MCF 10A (cell line): ENCODE measurements at regions of chr13 and their contacts with region 1.

Region 1: DNA sequence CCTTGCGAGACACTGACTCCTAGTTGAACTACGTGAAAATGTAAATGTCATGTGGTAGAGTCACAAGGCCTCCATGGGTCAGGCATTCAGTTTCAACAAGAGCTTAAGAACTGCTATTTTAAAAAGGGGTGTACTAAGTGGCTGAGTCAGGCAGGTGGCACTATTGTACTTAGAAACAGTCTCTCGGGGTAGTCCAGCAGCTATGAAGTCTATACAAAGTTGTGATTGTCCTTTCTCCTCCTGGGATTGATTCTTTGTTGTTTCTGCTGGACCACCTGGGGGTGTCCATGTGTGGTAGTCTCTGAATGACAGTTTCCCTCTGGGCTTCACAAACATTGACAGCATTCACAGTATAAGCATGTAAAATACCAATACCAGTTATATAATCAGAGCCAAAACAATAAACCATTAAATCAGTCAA is 33.0 kb downstream of the UGGT2 start:
- DNase-seq: peak; percentile 70
- H3K4me3 Mint-ChIP-seq: no peak overlapping the region
- H3K27ac Mint-ChIP-seq: peak overlapping the region; percentile 32
- H3K4me1 Mint-ChIP-seq: no peaks in the 10 kb centered on the region
- H3K27me3 Mint-ChIP-seq: no peaks in the 10 kb centered on the region
- CTCF ChIP-seq: peak; percentile 89

Region 2: DNA sequence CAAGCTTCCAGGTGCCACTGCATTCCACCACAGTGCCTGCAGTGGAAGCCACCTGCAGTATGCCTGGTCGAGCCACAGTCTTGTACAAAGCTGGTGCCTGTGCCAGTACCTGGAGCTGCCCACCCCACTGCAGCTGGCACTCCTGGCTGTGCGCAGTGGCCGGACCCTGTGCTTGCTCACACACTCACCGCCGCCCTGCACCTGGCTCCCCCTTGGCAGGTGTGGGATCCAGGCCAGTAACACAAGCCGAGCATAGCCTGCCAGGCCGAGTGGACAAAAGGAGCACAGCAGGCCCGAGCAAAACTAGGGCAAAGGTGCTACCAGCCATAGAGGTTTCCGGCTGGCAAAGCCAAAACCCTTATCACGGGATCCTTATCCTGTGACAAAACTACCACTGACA is 14.5 kb after region 1 on chr13:
- CTCF ChIA-PET with region 1: interaction called, 25 read pairs
- POLR2A ChIA-PET with region 1: interaction called, 6 read pairs
- intact Hi-C with region 1: no loop called
- DNase-seq: no peak
- H3K4me3 Mint-ChIP-seq: no peak overlapping the region
- H3K27ac Mint-ChIP-seq: no peak overlapping the region
- H3K4me1 Mint-ChIP-seq: peaks cover 5% of the 10 kb centered on the region
- H3K27me3 Mint-ChIP-seq: no peaks in the 10 kb centered on the region
- CTCF ChIP-seq: no peak

Region 3: GRCh38 chr13:96065849-96066248 is 45.7 kb after region 1 on chr13:
- CTCF ChIA-PET with region 1: no interaction called
- POLR2A ChIA-PET with region 1: no interaction called
- intact Hi-C with region 1: no loop called
- DNase-seq: no peak
- H3K4me3 Mint-ChIP-seq: no peak overlapping the region
- H3K27ac Mint-ChIP-seq: no peak overlapping the region
- H3K4me1 Mint-ChIP-seq: no peaks in the 10 kb centered on the region
- H3K27me3 Mint-ChIP-seq: peaks cover 51% of the 10 kb centered on the region
- CTCF ChIP-seq: no peak

Region 4: DNA sequence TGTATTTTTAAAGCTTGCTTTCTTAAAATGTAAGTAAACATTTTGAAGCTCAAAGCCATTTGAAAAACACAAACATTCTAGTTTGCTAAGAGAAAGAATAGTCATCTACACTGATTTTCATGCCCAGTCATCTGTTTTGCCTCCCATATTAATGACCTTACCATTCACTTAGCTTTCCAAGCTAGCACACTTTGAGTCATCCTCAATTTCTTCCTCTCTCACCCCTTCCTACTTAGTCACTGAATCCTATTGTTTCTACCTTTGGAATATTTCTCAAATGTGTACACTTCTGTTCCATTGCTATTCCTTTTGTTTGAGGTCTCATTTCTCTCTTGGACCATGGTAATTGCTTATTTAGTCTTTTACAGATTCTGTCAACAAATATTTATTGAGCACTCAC is 62.5 kb after region 1 on chr13:
- CTCF ChIA-PET with region 1: interaction called, 12 read pairs
- POLR2A ChIA-PET with region 1: no interaction called
- intact Hi-C with region 1: no loop called
- DNase-seq: peak; percentile 25
- H3K4me3 Mint-ChIP-seq: no peak overlapping the region
- H3K27ac Mint-ChIP-seq: no peak overlapping the region
- H3K4me1 Mint-ChIP-seq: no peaks in the 10 kb centered on the region
- H3K27me3 Mint-ChIP-seq: peaks cover 22% of the 10 kb centered on the region
- CTCF ChIP-seq: no peak

Region 5: GRCh38 chr13:96796091-96796633 is 776.0 kb after region 1 on chr13:
- CTCF ChIA-PET with region 1: no interaction called
- POLR2A ChIA-PET with region 1: no interaction called
- intact Hi-C with region 1: loop called (anchors 1 kb)
- DNase-seq: no peak
- H3K4me3 Mint-ChIP-seq: no peak overlapping the region
- H3K27ac Mint-ChIP-seq: no peak overlapping the region
- H3K4me1 Mint-ChIP-seq: peaks cover 6% of the 10 kb centered on the region
- H3K27me3 Mint-ChIP-seq: no peaks in the 10 kb centered on the region
- CTCF ChIP-seq: peak; percentile 52

Region 6: DNA sequence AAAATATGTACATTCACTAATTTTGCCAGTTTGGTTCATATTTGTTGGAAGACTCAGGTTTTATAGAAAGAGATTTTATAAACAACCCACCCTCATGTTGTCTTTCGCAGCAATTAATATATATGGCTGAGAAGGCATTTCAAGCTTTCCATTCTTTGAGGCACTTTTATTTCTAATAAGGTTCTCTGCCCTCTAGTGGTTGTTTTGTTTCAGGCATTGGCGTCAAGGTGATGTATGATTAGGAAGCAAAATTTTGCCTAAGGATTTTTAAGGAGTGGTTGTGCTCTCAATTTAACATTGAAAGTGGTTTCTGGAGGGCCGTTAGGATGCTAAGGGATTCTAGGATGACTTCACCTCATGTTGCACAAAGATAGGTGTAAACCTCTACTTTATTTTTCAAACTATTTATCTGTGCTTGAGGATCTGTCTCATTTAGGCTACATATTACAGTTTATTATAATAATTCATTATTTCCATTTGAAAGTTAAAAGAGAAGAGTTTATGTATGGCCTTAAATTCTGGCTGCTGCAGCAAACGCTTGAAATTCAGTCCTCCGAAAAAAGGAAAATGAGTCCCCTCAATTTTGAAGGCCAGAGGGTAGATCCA is 938.2 kb after region 1 on chr13:
- CTCF ChIA-PET with region 1: interaction called, 49 read pairs
- POLR2A ChIA-PET with region 1: no interaction called
- intact Hi-C with region 1: loop called (anchors 1 kb)
- DNase-seq: peak; percentile 64
- H3K4me3 Mint-ChIP-seq: no peak overlapping the region
- H3K27ac Mint-ChIP-seq: no peak overlapping the region
- H3K4me1 Mint-ChIP-seq: no peaks in the 10 kb centered on the region
- H3K27me3 Mint-ChIP-seq: no peaks in the 10 kb centered on the region
- CTCF ChIP-seq: peak; percentile 57